GM12878 (cell line): ENCODE measurements at regions of chr9 and their contacts with region 1.

Region 1: DNA sequence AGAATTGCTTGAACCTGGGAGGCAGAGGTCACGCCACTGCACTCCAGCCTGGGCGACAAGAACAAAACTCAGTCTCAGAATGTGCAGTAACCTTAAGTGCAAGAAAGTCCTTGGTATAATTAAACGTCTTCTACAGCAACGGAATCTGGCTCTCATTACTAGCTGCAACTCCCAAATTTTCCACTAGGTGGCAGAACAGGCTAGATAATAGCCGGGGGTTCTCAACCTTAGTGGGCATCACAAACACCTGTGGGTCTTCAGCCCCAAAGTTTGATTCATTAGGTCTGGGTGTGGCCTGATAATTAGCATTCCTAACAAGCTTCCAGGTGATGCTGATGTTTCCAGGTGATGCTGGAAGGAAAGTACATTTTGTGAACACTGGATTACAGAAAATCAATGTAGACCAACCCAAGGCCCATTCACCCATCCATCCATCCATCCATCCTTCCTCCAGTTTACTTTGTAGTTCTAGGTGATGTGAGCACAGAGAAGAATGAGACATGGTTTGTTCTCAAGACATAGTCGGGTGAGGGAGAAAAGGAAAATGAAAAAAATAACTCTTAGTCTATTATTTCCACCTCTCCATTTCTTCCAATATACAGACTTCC is 37.3 kb downstream of the FBXW2 start:
- DNase-seq: peak; percentile 30
- ATAC-seq: peak; percentile 94
- H3K4me3 ChIP-seq: no peak overlapping the region
- H3K27ac ChIP-seq: no peak overlapping the region
- H3K4me1 ChIP-seq: peaks cover 9% of the 10 kb centered on the region
- H3K27me3 ChIP-seq: no peaks in the 10 kb centered on the region
- CTCF ChIP-seq: peak; percentile 65 to 88 (median 84); a peak in 5 of 6 replicates
- EP300 ChIP-seq: no peak
- POLR2A ChIP-seq: no peak
- RAD21 ChIP-seq: peak; percentile 96

Region 2: GRCh38 chr9:120742951-120743416 is 12.9 kb before region 1 on chr9:
- CTCF ChIA-PET with region 1: interaction called, 15 read pairs
- POLR2A ChIA-PET with region 1: no interaction called
- RAD21 ChIA-PET with region 1: no interaction called
- SMC1A ChIA-PET with region 1: interaction called, 3 read pairs
- in situ Hi-C with region 1: no loop called
- intact Hi-C with region 1: no loop called
- DNase-seq: no peak
- ATAC-seq: peak; percentile 93
- H3K4me3 ChIP-seq: no peak overlapping the region
- H3K27ac ChIP-seq: no peak overlapping the region
- H3K4me1 ChIP-seq: no peaks in the 10 kb centered on the region
- H3K27me3 ChIP-seq: no peaks in the 10 kb centered on the region
- CTCF ChIP-seq: peak; percentile 72 to 84 (median 82)
- EP300 ChIP-seq: no peak
- POLR2A ChIP-seq: no peak
- RAD21 ChIP-seq: peak; percentile 76

Region 3: DNA sequence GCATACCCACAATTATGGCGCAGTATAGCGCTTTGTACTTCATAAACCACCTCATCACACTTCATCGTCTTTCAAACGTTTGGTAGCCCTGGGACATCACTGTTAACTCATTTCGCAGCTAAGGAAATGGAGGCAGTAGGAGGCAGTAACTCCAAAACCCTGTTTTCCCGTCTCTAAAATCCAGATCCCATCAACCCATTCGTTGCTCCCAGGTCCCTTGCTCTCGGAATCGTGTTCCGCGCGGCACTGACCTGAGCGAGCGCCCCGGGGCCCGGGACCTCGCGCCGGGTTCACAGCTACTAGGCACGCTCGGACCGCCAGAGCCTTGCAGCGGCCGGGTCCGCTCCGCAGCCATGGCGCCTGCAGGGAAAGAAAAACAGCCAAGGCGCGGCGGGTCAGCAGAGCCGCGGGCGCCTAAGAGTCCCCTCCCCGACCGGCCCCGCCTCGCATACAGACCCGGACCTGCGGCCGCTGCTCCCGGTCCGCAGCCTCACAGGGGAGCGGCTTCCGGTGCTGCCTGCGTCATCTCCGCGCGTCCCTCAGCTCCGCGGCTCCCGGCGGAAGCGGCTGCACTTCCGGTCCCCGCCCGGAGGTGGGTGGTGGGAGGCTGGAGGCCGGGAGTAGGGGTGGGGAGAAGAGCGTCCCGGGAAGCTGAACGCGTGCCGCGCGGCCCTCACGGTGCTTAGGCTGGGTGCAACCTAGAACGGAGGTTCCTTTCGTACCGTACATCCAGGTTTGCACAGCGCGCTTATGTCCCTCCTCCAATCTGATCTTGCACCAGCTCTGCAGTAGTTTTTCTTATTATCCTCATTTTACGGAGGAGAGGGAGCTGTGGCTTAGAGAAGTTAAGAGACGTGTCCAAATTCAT is 37.2 kb after region 1 on chr9 and contains the start of gene FBXW2:
- CTCF ChIA-PET with region 1: interaction called, 10 read pairs
- POLR2A ChIA-PET with region 1: interaction called, 3 read pairs
- RAD21 ChIA-PET with region 1: interaction called, 5 read pairs
- SMC1A ChIA-PET with region 1: interaction called, 4 read pairs
- in situ Hi-C with region 1: no loop called
- intact Hi-C with region 1: no loop called
- DNase-seq: peak; percentile 59
- ATAC-seq: peak; percentile 95
- H3K4me3 ChIP-seq: peak within 1 kb of the TSS; percentile 90
- H3K27ac ChIP-seq: peak within 1 kb of the TSS; percentile 86
- H3K4me1 ChIP-seq: peaks cover 9% of the 10 kb centered on the region
- H3K27me3 ChIP-seq: no peaks in the 10 kb centered on the region
- CTCF ChIP-seq: no peak
- EP300 ChIP-seq: no peak
- POLR2A ChIP-seq: peak; percentile 94
- RAD21 ChIP-seq: no peak
- polyA plus RNA-seq, gene FBXW2: 2.9 to 3.0 TPM

Region 4: GRCh38 chr9:120875954-120876841 is 120.3 kb after region 1 on chr9:
- CTCF ChIA-PET with region 1: interaction called, 11 read pairs
- POLR2A ChIA-PET with region 1: no interaction called
- RAD21 ChIA-PET with region 1: interaction called, 4 read pairs
- SMC1A ChIA-PET with region 1: interaction called, 5 read pairs
- in situ Hi-C with region 1: no loop called
- intact Hi-C with region 1: no loop called
- DNase-seq: no peak
- ATAC-seq: peak; percentile 80
- H3K4me3 ChIP-seq: peak overlapping the region; percentile 92
- H3K27ac ChIP-seq: peak overlapping the region; percentile 93
- H3K4me1 ChIP-seq: peaks cover 27% of the 10 kb centered on the region
- H3K27me3 ChIP-seq: no peaks in the 10 kb centered on the region
- CTCF ChIP-seq: no peak; a peak in 1 of 6 replicates
- EP300 ChIP-seq: peak in 1 of 2 experiments; percentile 54; a peak in 1 of 4 replicates
- POLR2A ChIP-seq: peak; percentile 79
- RAD21 ChIP-seq: no peak

Region 5: DNA sequence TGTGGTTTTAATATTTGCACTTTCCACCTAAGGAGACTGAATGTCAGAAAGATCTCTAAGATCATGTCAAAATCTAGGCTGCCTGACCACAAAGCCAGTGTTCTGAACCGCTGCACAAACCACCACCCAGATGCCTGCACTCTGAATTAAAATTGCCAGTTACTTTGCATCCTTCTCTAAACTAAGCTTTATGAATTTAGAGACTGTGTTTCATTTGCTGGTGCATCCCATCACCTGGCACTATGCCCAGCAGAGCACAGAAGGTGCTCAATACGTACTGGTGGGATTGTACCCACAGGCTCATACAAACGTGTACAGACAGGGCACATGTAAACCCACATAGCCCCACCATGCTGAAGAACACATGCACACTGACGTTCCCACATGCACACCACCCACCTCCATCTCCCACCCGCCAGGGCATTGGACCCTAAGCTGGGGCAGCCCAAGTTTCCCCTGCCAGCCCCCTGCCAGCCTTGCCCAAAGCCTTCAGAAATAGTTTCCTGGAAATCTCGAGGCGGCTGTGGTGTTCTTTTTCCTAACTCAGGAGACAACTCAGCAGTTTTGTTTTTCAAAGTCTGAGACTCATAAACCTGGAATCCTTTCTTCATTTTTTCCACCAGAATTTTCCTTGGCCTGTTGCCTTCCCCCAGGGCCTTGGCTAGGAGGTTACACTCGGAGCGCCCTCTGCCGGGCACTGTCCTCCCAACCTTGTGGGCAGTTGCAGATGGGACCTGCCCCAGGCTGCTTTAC is 180.3 kb after region 1 on chr9:
- CTCF ChIA-PET with region 1: interaction called, 64 read pairs
- POLR2A ChIA-PET with region 1: no interaction called
- RAD21 ChIA-PET with region 1: interaction called, 28 read pairs
- SMC1A ChIA-PET with region 1: interaction called, 30 read pairs
- in situ Hi-C with region 1: loop called (anchors 5 kb)
- intact Hi-C with region 1: loop called (anchors 1 kb)
- DNase-seq: peak; percentile 68
- ATAC-seq: peak; percentile 69
- H3K4me3 ChIP-seq: peak overlapping the region; percentile 19; the same call in 1 of the 2 replicates
- H3K27ac ChIP-seq: peak overlapping the region; percentile 96
- H3K4me1 ChIP-seq: peaks cover 47% of the 10 kb centered on the region
- H3K27me3 ChIP-seq: no peaks in the 10 kb centered on the region
- CTCF ChIP-seq: peak; percentile 90 to 96 (median 90)
- EP300 ChIP-seq: no peak
- POLR2A ChIP-seq: no peak
- RAD21 ChIP-seq: peak; percentile 97